Cardiac septum (tissue), 1 donor: ENCODE measurements at regions of chr1 and their contacts with region 1.

Region 1: GRCh38 chr1:156456622-156457465 is 43.7 kb downstream of the MEF2D start:
- DNase-seq: peak; percentile 98

Region 2: GRCh38 chr1:156407344-156407743 is 49.5 kb before region 1 on chr1:
- intact Hi-C with region 1: no loop called
- DNase-seq: no peak

Region 3: DNA sequence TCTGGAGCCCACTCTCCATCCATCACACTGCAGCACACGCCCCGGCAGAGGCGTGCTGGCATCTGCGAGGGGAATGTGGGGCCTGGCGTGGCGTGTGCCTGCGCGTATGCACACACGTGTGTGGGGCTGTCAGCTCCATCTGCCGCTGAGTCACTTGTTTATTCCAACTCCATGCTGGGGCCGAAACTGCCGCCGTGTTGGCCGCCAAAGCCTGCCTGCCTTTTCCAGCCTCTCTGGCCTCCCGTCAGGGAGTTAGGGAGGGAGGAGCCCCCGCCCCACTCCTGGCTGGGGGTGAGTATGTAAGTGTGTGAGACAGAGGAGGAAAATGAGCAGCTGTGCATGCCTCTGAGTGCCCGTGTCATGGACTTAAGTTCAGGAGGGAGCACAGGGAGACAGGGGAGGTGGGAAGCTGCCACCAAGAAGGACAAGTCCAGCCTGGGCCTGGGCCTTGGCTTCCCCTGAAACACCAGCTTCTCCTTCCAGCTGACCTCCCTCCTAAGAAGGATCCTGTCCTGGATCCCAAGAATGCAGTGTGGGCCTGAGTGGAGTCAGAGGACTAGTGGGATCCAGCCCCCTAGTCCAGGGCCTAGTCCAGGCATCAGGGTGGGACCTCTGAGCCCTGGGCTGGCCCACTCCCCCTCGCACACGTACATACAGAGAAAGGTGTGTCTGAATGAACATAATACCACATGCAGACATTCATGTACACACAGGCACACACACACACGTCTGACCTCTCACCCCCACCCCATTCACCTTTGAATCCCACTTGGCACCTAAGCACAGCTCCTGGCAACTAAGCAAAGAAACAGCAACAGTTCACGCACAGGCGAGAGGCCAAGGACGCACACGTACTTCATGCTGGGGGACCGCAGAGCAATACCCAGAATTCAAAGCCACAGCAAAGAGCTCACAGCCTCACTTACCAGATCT is 19.0 kb after region 1 on chr1:
- intact Hi-C with region 1: loop called (anchors 1 kb)
- DNase-seq: peak; percentile 90

Region 4: GRCh38 chr1:156500797-156501499 is 44.1 kb after region 1 on chr1:
- intact Hi-C with region 1: loop called (anchors 1 kb)
- DNase-seq: peak; percentile 98

Region 5: GRCh38 chr1:156540791-156541383 is 84.0 kb after region 1 on chr1:
- intact Hi-C with region 1: no loop called
- DNase-seq: no peak

Region 6: GRCh38 chr1:156601122-156601830 is 144.4 kb after region 1 on chr1 and contains the start of gene GPATCH4:
- intact Hi-C with region 1: loop called (anchors 2 kb)
- DNase-seq: peak; percentile 89
- total RNA-seq, gene GPATCH4: 15.5 TPM

Region 7: DNA sequence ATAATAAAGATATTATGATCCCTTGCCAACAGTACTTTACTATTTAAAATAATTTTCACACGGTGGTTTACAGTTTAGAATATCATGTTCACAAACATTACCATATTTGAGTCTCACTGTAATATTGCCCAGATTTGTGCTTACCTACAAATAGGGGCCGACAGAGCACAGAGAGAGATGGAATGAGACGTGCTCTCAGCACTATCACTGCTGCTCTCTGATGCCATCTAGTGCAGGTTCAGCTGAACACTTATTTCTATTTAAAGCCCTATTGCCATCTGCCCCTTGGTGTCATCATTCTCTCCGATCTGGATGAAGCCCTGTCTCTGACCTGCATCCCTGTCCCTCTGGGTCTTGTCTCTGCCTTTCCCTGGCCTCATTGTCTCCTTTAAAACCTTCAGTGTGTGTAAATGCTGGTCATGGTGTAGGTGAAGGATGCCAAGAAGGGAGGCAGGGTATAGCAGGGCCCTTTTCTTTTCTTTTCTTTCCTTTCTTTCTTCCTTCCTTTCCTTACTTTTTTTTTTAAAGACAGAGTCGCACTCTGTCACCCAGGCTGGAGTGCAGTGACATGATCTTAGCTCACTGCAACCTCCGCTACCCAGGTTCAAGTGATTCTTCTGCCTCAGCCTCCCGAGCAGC is 151.3 kb after region 1 on chr1:
- intact Hi-C with region 1: loop called (anchors 2 kb)
- DNase-seq: no peak

Region 8: GRCh38 chr1:156677616-156678596 is 221.1 kb after region 1 on chr1:
- intact Hi-C with region 1: loop called (anchors 5 kb)
- DNase-seq: no peak